ENCODE measurements at regions of chr2 and their contacts with region 1.

Region 1: DNA sequence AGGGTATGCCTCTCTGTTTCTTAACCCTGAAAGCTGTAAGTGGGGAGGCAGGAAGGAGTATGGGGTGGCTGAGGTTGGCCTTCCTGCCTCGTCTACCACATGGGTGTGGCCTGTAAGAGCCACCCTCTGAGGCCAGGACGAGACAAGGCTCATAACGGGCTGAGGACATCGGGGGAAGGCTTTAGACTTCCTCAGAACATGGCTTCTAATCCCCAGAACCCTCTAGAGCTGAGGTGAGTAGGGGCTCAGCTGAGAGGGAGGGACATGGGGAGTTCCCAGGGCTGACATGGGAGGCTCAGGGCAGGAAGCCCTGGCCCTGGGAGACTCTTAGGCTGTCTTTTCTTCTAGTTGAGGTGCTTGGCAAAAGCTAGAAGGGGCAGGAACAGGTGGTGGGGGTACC is 36.7 kb downstream of the EMX1 start:
- DNase-seq: no peak
- H3K4me3 ChIP-seq: no peak overlapping the region
- H3K27ac ChIP-seq: no peak overlapping the region
- H3K4me1 ChIP-seq: peaks cover 3 to 24% (median 17%) of the 10 kb centered on the region in 4 experiments
- H3K27me3 ChIP-seq: no peaks in the 10 kb centered on the region; a peak in 1 of 7 replicates
- CTCF ChIP-seq: no peak
- EP300 ChIP-seq: no peak
- POLR2A ChIP-seq: no peak
- RAD21 ChIP-seq: no peak

Region 2: DNA sequence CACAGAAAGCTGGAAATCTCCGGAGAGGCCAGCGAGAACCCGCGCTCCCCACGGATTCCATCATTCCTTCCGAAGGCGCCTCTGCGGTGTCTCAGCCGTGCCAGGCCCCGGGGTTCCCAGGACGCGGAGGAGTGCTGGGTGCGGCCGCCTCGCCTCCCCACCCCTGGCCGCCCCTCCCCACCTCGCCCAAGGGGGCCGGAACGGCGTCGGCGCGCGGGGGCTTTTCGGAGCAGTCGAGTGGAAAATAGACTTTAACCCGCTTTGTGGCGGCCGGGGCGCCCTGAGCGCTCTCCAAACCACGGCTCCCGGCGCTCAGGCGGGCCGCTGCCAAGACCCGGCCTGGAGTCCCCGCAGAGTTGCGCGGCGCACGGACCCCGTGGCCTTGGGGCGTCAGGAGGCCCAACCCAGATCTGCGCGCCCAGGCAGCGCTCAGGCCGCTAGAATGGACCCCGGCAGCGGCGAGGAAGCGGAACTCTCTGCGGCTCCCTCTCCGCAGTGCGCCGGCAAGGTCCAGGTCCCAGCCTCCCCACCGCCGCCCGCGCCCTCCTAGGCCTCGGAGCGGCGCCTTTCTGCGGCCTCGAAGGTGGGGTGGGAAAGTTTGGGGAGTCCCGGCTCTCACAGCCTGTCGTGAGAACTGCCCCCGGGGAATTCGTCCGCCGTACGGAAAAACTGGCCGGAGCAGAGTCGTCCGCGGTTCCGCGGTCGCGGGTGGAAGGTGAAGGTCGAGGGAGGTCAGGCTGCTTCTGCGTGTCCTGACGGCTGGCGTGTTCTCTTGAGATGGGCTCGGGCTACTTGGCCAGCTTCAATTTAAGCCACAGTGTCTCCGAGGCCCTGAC is 37.9 kb before region 1 on chr2:
- CTCF ChIA-PET with region 1: interaction called, 10 read pairs
- POLR2A ChIA-PET with region 1: interaction called, 7 read pairs
- DNase-seq: peak in 1 of 2 experiments; percentile 86
- H3K4me3 ChIP-seq: peak overlapping the region; percentile 55 to 70 (median 66)
- H3K27ac ChIP-seq: no peak overlapping the region
- H3K4me1 ChIP-seq: peaks cover 20 to 52% (median 28%) of the 10 kb centered on the region in 4 experiments
- H3K27me3 ChIP-seq: peaks cover 80 to 96% (median 89%) of the 10 kb centered on the region in 4 experiments
- CTCF ChIP-seq: no peak
- EP300 ChIP-seq: no peak
- POLR2A ChIP-seq: no peak
- RAD21 ChIP-seq: no peak

Region 3: GRCh38 chr2:72924353-72925240 is 29.4 kb before region 1 on chr2:
- CTCF ChIA-PET with region 1: interaction called, 15 read pairs
- POLR2A ChIA-PET with region 1: interaction called, 18 read pairs
- DNase-seq: peak in 1 of 2 experiments; percentile 81
- H3K4me3 ChIP-seq: peak overlapping the region in 3 of 4 experiments; percentile 19 to 54 (median 21); a peak in 6 of 8 replicates
- H3K27ac ChIP-seq: no peak overlapping the region
- H3K4me1 ChIP-seq: peaks cover 6 to 37% (median 18%) of the 10 kb centered on the region in 4 experiments
- H3K27me3 ChIP-seq: peaks cover 89 to 100% (median 97%) of the 10 kb centered on the region in 4 experiments
- CTCF ChIP-seq: no peak
- EP300 ChIP-seq: no peak
- POLR2A ChIP-seq: no peak
- RAD21 ChIP-seq: no peak; a peak in 1 of 4 replicates

Region 4: DNA sequence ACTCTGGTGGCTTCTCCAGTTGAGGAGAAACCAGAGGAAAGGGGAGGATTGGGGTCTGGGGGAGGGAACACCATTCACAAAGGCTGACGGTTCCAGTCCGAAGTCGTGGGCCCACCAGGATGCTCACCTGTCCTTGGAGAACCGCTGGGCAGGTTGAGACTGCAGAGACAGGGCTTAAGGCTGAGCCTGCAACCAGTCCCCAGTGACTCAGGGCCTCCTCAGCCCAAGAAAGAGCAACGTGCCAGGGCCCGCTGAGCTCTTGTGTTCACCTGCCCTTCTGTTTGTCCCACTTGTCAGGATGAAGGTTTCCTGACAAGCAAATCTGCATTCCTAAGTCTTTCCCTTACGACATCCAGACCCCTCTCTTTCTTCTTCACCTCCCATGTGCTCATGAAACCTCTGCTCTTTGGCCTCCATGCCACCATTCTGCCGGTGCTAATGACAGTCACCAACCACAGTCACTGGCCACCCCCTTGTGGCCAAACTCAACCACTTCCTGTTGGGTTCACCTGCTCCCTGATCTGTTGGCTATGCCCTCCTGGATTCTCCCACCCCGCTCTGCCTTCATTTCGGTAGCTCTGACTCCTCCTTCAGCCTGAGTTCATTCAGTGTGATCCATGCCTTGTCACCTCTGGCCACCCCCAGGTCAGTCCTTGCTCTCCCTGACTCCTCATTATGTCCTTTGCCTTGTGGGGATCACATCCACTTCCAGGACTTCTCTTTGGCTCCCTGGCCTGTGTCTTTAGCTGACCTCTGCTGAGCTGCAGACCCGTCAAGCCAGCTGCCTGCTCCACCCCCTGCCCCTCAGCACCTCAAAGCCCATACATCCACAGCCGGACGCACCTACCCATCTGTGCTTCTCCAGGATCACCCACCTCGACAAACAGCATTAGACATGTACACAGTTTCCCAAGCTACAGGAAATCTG is 19.0 kb before region 1 on chr2:
- CTCF ChIA-PET with region 1: interaction called, 54 read pairs
- POLR2A ChIA-PET with region 1: interaction called, 17 read pairs
- DNase-seq: no peak
- H3K4me3 ChIP-seq: no peak overlapping the region
- H3K27ac ChIP-seq: no peak overlapping the region
- H3K4me1 ChIP-seq: peaks cover 0 to 16% (median 9%) of the 10 kb centered on the region in 4 experiments; a peak in 5 of 7 replicates
- H3K27me3 ChIP-seq: peaks cover 0 to 19% (median 10%) of the 10 kb centered on the region in 4 experiments; a peak in 3 of 7 replicates
- CTCF ChIP-seq: peak in 2 of 3 experiments; percentile 77 to 79; a peak in 3 of 4 replicates
- EP300 ChIP-seq: no peak
- POLR2A ChIP-seq: no peak
- RAD21 ChIP-seq: peak; percentile 79 to 80

Region 5: GRCh38 chr2:72940786-72941185 is 13.2 kb before region 1 on chr2:
- CTCF ChIA-PET with region 1: interaction called, 54 read pairs
- POLR2A ChIA-PET with region 1: interaction called, 17 read pairs
- DNase-seq: no peak
- H3K4me3 ChIP-seq: no peak overlapping the region
- H3K27ac ChIP-seq: no peak overlapping the region
- H3K4me1 ChIP-seq: peaks cover 0 to 22% (median 15%) of the 10 kb centered on the region in 4 experiments; a peak in 6 of 7 replicates
- H3K27me3 ChIP-seq: peaks cover 0 to under 1% (median 0%) of the 10 kb centered on the region in 4 experiments; a peak in 2 of 7 replicates
- CTCF ChIP-seq: no peak
- EP300 ChIP-seq: no peak
- POLR2A ChIP-seq: no peak
- RAD21 ChIP-seq: no peak

Region 6: DNA sequence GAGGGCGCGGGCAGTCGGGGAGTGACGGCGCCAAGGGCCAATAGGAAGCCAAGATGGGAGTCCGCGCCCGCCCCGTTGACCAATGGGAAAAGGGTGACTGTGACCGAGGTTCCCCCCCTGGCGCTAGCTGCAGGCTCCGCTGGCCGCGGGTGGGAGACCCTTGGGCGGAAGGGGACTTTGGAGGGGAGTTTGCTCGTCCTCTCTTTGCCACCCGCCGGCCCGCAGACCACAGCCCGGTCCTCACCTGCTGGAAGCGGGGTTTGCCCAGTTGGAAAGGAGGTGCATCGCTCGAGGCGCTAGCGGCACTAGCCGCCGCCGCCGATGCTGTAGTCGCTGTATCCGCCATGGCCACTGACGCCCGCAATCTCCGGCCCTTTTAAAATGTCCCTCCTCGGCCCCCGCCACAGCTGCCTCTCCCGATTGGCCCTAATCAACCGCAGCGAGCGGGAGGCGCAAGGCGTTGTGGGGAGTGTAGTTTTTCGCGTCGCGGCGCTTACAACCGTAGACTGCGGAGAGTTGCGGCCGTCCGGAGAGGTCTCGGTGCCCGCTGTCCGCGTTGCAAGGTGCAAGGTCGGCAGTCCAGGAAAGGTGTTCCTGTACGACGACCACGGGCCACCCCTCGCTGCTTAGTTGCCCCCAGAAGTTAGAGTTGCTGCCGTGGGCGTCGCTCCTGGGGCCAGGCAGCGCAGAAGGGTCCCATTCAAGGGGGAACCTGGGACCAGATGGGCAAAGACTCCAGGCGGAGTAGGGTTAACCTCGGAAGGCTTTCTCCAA is 117.6 kb after region 1 on chr2 and contains the start of gene SFXN5:
- CTCF ChIA-PET with region 1: no interaction called
- POLR2A ChIA-PET with region 1: no interaction called
- DNase-seq: peak; percentile 82 to 100
- H3K4me3 ChIP-seq: peak within 1 kb of the TSS; percentile 63 to 86 (median 76)
- H3K27ac ChIP-seq: peak within 1 kb of the TSS; percentile 89; the same call in 1 of the 2 replicates
- H3K4me1 ChIP-seq: peaks cover 4 to 15% (median 7%) of the 10 kb centered on the region in 4 experiments; a peak in 6 of 7 replicates
- H3K27me3 ChIP-seq: peaks cover 0 to 4% (median 0%) of the 10 kb centered on the region in 4 experiments; a peak in 4 of 7 replicates
- CTCF ChIP-seq: no peak
- EP300 ChIP-seq: 0 out of 3 replicates have a peak, but pooled peaks of 1 of the 2 experiments have one; percentile 24
- POLR2A ChIP-seq: peak in 1 of 2 experiments; percentile 93; a peak in 2 of 3 replicates
- RAD21 ChIP-seq: no peak
- total RNA-seq, gene SFXN5: 29.3 and 29.4 TPM in 2 replicates